WTC11 (cell line): ENCODE measurements at regions of chr2 and their contacts with region 1.

Region 1: GRCh38 chr2:88831792-88832248 is 140.3 kb downstream of the RPIA start:
- DNase-seq: peak; percentile 90
- ATAC-seq: peak; percentile 97
- H3K4me3 Mint-ChIP-seq: no peak overlapping the region
- H3K27ac Mint-ChIP-seq: no peak overlapping the region
- H3K4me1 Mint-ChIP-seq: no peaks in the 10 kb centered on the region
- H3K27me3 Mint-ChIP-seq: no peaks in the 10 kb centered on the region
- CTCF ChIP-seq: peak; percentile 84

Region 2: DNA sequence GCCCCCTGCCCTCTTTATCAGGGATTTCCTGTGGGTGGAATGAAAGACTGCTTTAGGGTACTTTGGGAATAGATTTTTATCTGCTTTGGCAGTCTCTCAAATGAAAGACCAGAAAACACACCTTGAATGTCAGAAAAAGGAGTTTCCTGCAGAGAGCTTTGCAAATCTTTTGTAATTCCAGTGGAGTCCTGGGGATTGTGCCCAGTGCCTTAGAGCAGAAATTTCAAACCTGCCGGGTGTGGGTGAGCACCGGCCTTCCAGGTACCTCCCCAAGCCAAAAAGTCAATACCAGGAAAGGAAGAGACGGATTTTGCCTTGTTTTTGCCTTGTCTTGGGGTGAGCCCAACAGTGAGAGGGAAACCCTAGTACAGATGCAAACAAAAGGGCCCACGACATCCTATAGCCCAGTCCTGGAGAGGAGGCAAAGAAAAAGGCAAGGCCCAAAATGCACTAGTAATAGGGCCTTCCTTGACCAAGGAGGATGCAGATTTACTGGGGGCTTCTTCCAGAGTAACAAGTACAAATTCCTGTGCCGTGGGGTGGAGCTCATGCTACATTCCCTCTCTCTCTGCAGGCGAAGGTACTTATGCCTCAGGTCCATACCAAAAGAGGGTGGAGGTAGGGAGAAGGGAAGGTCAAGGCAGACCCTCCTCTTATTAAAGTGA is 415.7 kb before region 1 on chr2:
- CTCF ChIA-PET with region 1: no interaction called
- POLR2A ChIA-PET with region 1: no interaction called
- DNase-seq: peak; percentile 48
- ATAC-seq: peak; percentile 87
- H3K4me3 Mint-ChIP-seq: peak overlapping the region; percentile 7
- H3K27ac Mint-ChIP-seq: peak overlapping the region; percentile 96
- H3K4me1 Mint-ChIP-seq: peaks cover 49% of the 10 kb centered on the region
- H3K27me3 Mint-ChIP-seq: peaks cover 4% of the 10 kb centered on the region
- CTCF ChIP-seq: no peak

Region 3: GRCh38 chr2:88574445-88574844 is 257.4 kb before region 1 on chr2:
- CTCF ChIA-PET with region 1: no interaction called
- POLR2A ChIA-PET with region 1: no interaction called
- DNase-seq: no peak
- ATAC-seq: no peak
- H3K4me3 Mint-ChIP-seq: no peak overlapping the region
- H3K27ac Mint-ChIP-seq: no peak overlapping the region
- H3K4me1 Mint-ChIP-seq: no peaks in the 10 kb centered on the region
- H3K27me3 Mint-ChIP-seq: no peaks in the 10 kb centered on the region
- CTCF ChIP-seq: no peak

Region 4: GRCh38 chr2:88590998-88591613 is 240.7 kb before region 1 on chr2:
- CTCF ChIA-PET with region 1: no interaction called
- POLR2A ChIA-PET with region 1: no interaction called
- DNase-seq: peak; percentile 21
- ATAC-seq: peak; percentile 66
- H3K4me3 Mint-ChIP-seq: no peak overlapping the region
- H3K27ac Mint-ChIP-seq: 0 out of 2 replicates have a peak overlapping the region, but pooled peaks have one; percentile 23
- H3K4me1 Mint-ChIP-seq: no peaks in the 10 kb centered on the region
- H3K27me3 Mint-ChIP-seq: no peaks in the 10 kb centered on the region
- CTCF ChIP-seq: no peak; the same call in none of the 2 replicates

Region 5: DNA sequence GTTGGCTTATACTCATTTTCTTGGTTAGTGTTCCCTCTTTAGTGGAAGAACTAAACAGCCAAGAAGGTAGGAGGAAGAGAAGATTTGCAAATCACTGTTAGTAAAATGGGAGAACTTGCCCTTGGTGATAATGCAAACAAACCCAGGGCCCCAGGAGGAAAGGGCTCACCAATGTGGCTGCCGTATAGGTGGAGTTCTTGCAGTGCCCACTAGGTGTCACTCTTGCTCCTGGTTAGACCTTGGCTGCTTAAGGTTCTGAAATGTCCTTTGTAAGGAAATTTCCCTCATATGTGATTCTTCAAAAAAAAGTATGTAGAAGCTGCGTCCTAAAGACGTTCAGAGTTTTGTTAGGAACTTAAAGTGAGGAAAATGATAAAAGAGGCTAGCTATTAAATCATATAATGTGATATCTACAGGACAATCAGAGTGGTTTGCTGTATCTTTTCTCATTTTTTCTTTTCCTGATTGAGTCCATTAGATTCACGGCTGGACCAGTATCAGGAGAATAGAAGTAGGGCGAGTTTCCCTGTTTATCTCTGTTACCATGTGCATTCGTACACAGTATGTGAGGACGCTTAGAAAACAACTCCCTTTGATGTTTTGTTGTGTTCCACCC is 91.7 kb before region 1 on chr2:
- CTCF ChIA-PET with region 1: interaction called, 10 read pairs
- POLR2A ChIA-PET with region 1: no interaction called
- DNase-seq: peak; percentile 81
- ATAC-seq: peak; percentile 93
- H3K4me3 Mint-ChIP-seq: no peak overlapping the region
- H3K27ac Mint-ChIP-seq: no peak overlapping the region
- H3K4me1 Mint-ChIP-seq: peaks cover 15% of the 10 kb centered on the region
- H3K27me3 Mint-ChIP-seq: no peaks in the 10 kb centered on the region
- CTCF ChIP-seq: peak; percentile 89

Region 6: DNA sequence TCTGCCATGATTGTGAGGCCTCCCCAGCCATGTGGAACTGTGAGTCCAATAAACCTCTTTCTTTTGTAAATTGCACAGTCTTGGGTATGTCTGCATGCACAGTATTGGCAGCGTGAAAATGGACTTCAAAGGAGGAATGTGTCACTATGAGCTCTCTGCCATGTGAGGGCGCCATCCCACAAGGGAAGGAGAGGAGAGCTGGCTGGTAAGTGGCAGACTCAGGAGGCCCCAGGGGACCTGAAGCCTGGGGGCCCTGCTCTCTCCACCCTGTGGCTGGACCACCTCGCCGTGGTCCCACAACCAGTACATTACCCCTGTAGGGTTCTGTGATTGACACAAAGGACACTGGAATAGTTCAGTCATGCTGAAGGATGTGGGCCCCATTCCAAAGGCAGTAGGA is 18.2 kb before region 1 on chr2:
- CTCF ChIA-PET with region 1: interaction called, 18 read pairs
- POLR2A ChIA-PET with region 1: no interaction called
- DNase-seq: peak; percentile 38
- ATAC-seq: peak; percentile 32
- H3K4me3 Mint-ChIP-seq: no peak overlapping the region
- H3K27ac Mint-ChIP-seq: no peak overlapping the region
- H3K4me1 Mint-ChIP-seq: no peaks in the 10 kb centered on the region
- H3K27me3 Mint-ChIP-seq: peaks cover 14% of the 10 kb centered on the region
- CTCF ChIP-seq: no peak

Region 7: DNA sequence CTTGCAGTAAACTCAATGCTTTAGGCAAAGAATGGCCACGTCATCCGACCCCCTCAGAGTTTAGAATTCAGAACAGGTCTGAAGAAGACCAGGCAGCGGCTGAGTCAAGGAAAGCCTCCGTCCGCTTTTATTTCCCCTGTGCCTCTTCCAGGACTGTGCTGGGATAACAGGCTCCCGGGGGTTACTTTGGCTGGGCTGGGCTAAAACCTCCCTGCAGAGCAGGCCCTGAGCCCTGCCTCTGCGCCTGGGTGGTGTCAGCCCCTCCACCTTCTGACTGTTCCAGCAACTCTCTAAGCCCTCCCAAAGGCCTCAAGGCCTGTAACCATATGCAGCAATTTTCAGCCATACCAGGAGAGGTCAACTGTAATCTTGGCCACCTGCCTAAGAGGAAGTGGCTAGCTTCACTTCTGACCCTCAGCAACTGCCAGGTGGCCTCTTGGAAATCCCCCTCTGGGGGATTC is 26.2 kb after region 1 on chr2:
- CTCF ChIA-PET with region 1: interaction called, 25 read pairs
- POLR2A ChIA-PET with region 1: no interaction called
- DNase-seq: peak; percentile 19
- ATAC-seq: peak; percentile 86
- H3K4me3 Mint-ChIP-seq: no peak overlapping the region
- H3K27ac Mint-ChIP-seq: peak overlapping the region; percentile 35; the same call in 1 of the 2 replicates
- H3K4me1 Mint-ChIP-seq: peaks cover 35% of the 10 kb centered on the region
- H3K27me3 Mint-ChIP-seq: no peaks in the 10 kb centered on the region; the same call in 1 of the 2 replicates
- CTCF ChIP-seq: no peak

Region 8: DNA sequence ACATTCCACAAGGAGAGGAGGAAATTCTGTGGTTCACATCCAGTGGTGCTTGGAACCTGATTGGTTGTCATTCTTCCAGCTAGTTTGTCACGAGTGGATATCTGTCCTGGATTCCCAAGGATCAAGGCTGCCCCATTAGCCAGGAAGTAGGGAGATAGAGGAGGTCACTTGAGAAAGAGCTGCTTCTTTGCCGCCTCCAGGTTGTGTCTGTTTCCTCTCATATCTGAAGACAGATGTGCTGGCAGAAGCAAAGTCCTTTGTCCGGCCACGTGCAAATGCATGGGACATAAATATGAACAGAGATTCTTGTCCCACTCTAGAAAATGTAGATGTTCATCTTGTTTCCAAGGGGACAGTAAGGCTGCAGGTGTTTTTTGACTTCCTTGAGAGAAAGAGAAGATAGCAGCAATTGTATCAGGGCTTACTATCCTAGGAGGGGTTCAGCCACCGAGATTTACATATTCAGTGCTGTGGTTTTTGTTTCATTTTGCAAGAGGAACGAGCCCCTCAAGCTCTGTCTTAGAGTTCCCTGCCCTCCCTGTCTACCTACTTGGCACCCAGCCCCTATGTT is 34.1 kb after region 1 on chr2:
- CTCF ChIA-PET with region 1: interaction called, 14 read pairs
- POLR2A ChIA-PET with region 1: no interaction called
- DNase-seq: no peak
- ATAC-seq: no peak
- H3K4me3 Mint-ChIP-seq: no peak overlapping the region
- H3K27ac Mint-ChIP-seq: no peak overlapping the region
- H3K4me1 Mint-ChIP-seq: peaks cover 4% of the 10 kb centered on the region
- H3K27me3 Mint-ChIP-seq: no peaks in the 10 kb centered on the region
- CTCF ChIP-seq: no peak

Region 9: DNA sequence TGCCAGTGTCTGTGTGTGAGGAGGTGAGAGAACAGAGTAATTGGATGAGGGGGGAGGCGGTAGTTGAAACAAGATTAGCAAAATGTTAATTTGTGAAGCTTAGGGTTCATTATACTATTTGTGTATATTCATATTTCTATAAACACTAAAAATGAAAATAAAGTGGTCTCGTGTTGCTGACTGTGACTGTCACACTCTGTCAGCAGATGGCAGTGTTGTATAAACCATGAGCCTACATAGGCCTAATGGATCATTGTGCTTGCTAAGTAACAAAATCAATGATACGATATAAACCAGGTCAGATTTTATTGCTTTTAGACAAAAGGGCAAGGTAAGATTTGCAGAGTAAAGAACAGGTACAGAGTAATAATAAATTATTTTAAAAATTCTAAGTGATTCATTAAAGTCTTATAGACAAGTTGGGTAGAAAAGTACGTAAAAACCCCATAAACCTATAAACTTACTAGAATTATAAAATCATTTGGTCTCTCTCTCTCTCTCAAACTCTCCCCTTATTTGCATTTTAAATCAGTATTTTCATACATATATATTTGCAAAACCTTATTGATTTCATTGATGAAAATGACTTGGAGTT is 42.3 kb after region 1 on chr2:
- CTCF ChIA-PET with region 1: interaction called, 40 read pairs
- POLR2A ChIA-PET with region 1: no interaction called
- DNase-seq: peak; percentile 26
- ATAC-seq: peak; percentile 71
- H3K4me3 Mint-ChIP-seq: no peak overlapping the region
- H3K27ac Mint-ChIP-seq: no peak overlapping the region
- H3K4me1 Mint-ChIP-seq: peaks cover 7% of the 10 kb centered on the region
- H3K27me3 Mint-ChIP-seq: no peaks in the 10 kb centered on the region; the same call in 1 of the 2 replicates
- CTCF ChIP-seq: peak; percentile 56

Region 10: GRCh38 chr2:88903749-88904353 is 72.0 kb after region 1 on chr2:
- CTCF ChIA-PET with region 1: interaction called, 19 read pairs
- POLR2A ChIA-PET with region 1: no interaction called
- DNase-seq: no peak
- ATAC-seq: peak; percentile 79
- H3K4me3 Mint-ChIP-seq: no peak overlapping the region
- H3K27ac Mint-ChIP-seq: no peak overlapping the region
- H3K4me1 Mint-ChIP-seq: no peaks in the 10 kb centered on the region
- H3K27me3 Mint-ChIP-seq: no peaks in the 10 kb centered on the region
- CTCF ChIP-seq: peak; percentile 56